ENCODE measurements at regions of chr5 and their contacts with region 1.

Region 1: DNA sequence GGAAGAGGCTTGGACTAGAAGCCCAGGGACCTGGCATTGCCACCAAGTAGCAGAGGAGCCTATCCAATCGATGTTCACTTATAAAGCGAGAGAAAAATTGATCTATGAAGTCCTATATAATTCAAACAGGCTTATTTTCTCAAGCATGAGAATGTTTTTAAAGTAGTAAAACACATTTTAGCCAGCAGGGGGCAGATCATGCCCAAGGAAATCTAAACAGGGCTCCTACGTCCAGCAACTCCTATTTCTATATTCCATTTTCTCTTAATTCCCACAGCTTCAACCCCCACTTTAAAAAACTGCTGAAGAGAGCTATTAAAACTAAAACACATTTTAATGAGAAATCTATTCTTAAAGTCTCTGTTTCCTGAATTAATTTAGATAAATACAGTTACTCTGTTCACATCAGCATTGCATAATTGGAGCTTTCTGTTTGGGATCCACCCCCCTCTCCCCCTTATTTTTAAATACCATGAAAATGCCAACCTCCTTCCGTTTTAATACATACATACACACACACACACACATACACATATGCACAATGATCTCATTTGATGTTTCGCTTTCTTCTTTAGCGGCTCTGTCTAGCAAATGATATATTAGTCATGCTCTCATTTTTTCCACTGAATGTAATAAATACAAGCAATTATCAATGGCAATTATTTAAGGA is 144.9 kb downstream of the MYO10 start:
- DNase-seq: no peak
- H3K4me3 Mint-ChIP-seq: no peak overlapping the region
- H3K27ac Mint-ChIP-seq: no peak overlapping the region
- H3K4me1 Mint-ChIP-seq: no peaks in the 10 kb centered on the region
- H3K27me3 Mint-ChIP-seq: no peaks in the 10 kb centered on the region

Region 2: GRCh38 chr5:17132444-17133083 is 341.4 kb after region 1 on chr5:
- intact Hi-C with region 1: loop called (anchors 1 kb)
- DNase-seq: no peak
- H3K4me3 Mint-ChIP-seq: no peak overlapping the region
- H3K27ac Mint-ChIP-seq: no peak overlapping the region
- H3K4me1 Mint-ChIP-seq: peaks cover 7% of the 10 kb centered on the region
- H3K27me3 Mint-ChIP-seq: peaks cover 1% of the 10 kb centered on the region

Region 3: DNA sequence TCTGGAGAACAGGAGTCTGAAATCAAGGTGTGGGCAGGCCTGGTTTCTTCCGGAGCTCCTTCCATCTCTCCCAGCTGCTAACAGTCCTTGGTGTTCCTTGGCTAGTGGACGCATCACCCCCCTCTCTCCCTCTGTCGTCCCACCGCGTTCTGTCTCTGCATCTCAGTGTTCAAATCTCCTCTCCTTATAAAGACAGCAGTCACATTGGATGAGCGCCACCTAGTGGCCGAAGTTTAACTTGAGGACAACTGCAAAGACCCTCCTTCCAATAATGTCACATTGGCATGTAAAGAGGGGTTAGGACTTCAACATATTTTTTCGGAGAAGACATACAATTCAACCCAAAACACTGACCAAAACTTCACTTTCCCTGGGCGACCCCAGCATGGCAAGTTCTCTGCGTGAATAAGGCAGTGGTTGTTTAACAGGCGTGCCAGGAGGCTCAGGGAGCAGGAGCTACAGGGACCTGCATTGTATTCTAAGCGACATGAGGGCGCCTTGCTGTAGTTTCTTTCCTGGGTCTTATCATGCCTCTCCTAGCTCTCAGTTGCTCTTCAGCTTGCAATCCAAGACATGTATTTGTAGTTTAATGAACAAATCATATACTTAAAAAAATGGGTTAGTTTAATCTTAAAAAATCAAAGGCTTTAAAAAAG is 398.3 kb after region 1 on chr5:
- intact Hi-C with region 1: loop called (anchors 1 kb)
- DNase-seq: peak; percentile 11
- H3K4me3 Mint-ChIP-seq: no peak overlapping the region
- H3K27ac Mint-ChIP-seq: no peak overlapping the region
- H3K4me1 Mint-ChIP-seq: no peaks in the 10 kb centered on the region
- H3K27me3 Mint-ChIP-seq: peaks cover 2% of the 10 kb centered on the region

Region 4: GRCh38 chr5:17204133-17204489 is 412.9 kb after region 1 on chr5:
- intact Hi-C with region 1: loop called (anchors 1 kb)
- DNase-seq: no peak
- H3K4me3 Mint-ChIP-seq: no peak overlapping the region
- H3K27ac Mint-ChIP-seq: no peak overlapping the region
- H3K4me1 Mint-ChIP-seq: no peaks in the 10 kb centered on the region
- H3K27me3 Mint-ChIP-seq: peaks cover 2% of the 10 kb centered on the region

Measured in activated T-helper 1 cell treated with anti-CD3 and anti-CD28 coated beads, Interleukin-12 subunit alpha, Interleukin-12 subunit beta, Interleukin-2, Interleukin-4 antibody, amounts not matched to agents 30 ng/mL and 10 ng/mL and 1 ng/mL, durations not matched to agents 14 hours and 24 hours and 36 hours (primary cell).